Naive thymus-derived CD4-positive, alpha-beta T cell (primary cell): ENCODE measurements at regions of chr2 and their contacts with region 1.

Region 1: GRCh38 chr2:72927619-72928550 is 10.6 kb downstream of the EMX1 start:
- DNase-seq: peak in 1 of 9 donors; percentile 0
- ATAC-seq: no peak
- H3K4me3 ChIP-seq: no peak overlapping the region
- H3K4me3 Mint-ChIP-seq: no peak overlapping the region
- H3K27ac ChIP-seq: no peak overlapping the region
- H3K27ac Mint-ChIP-seq: no peak overlapping the region
- H3K4me1 ChIP-seq: no peaks in the 10 kb centered on the region
- H3K4me1 Mint-ChIP-seq: peaks cover 0 to 9% (median 5%) of the 10 kb centered on the region in 7 donors
- H3K27me3 ChIP-seq: peaks cover 0 to 14% of the 10 kb centered on the region in 2 donors
- H3K27me3 Mint-ChIP-seq: peaks cover 6 to 25% (median 12%) of the 10 kb centered on the region in 5 donors

Region 2: GRCh38 chr2:72915907-72916742 is 11.8 kb before region 1 on chr2:
- CTCF ChIA-PET with region 1: no interaction called
- POLR2A ChIA-PET with region 1: no interaction called
- intact Hi-C with region 1: loop called in 1 of 2 experiments (anchors 1 kb)
- DNase-seq: peak in 7 of 9 donors; percentile 27 to 53 (median 41)
- ATAC-seq: peak; percentile 62
- H3K4me3 ChIP-seq: peak overlapping the region; percentile 47
- H3K4me3 Mint-ChIP-seq: peak overlapping the region; percentile 56 to 89 (median 82)
- H3K27ac ChIP-seq: no peak overlapping the region
- H3K27ac Mint-ChIP-seq: no peak overlapping the region
- H3K4me1 ChIP-seq: peaks cover 13 to 31% of the 10 kb centered on the region in 2 donors
- H3K4me1 Mint-ChIP-seq: peaks cover 8 to 32% (median 28%) of the 10 kb centered on the region in 7 donors
- H3K27me3 ChIP-seq: peaks cover 17 to 44% of the 10 kb centered on the region in 2 donors
- H3K27me3 Mint-ChIP-seq: peaks cover 57 to 83% (median 58%) of the 10 kb centered on the region in 5 donors